Esophagus muscularis mucosa (tissue), 4 donors: ENCODE measurements at regions of chr10 and their contacts with region 1.

Region 1: DNA sequence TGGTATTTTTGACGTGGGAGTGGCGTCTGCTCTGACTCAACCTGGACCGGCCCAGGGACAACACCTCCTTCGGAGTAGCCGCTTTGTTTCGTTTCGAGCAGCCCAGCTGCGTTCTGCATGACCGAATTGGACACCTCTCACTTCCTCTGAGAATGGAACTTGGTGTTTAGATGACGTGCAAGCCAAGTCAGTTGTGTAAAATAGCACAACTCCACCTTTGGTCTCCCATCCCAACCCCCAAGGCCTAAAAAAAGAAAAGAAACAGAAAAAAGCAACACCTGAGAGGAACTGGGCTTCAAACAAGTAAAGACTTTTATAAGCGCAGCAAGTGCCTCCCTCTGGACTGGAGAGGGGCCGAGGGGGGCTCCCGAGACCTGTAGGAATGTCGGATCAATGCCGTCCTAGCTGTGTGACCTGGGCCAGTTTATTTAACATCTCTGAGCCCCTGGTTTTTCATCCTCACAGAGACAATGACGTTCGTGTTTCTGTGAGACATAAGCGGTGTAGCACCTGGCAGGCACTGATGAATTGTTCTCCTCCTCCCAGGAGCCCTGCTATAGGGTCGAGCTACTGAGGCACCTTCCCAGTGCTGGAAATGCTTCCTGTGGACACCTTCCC is 52.0 kb upstream of the SMNDC1 start:
- DNase-seq: no peak
- H3K4me3 ChIP-seq: peak overlapping the region in 3 of 4 donors; percentile 13 to 20 (median 17)
- H3K27ac ChIP-seq: peak overlapping the region in 2 of 4 donors; percentile 27 to 52
- H3K4me1 ChIP-seq: peaks cover 16 to 49% (median 44%) of the 10 kb centered on the region in 4 donors
- H3K27me3 ChIP-seq: no peaks in the 10 kb centered on the region
- CTCF ChIP-seq: no peak
- EP300 ChIP-seq: no peak
- POLR2A ChIP-seq: no peak

Region 2: GRCh38 chr10:110414563-110415309 is 58.0 kb after region 1 on chr10:
- intact Hi-C with region 1: loop called (anchors 5 kb)
- DNase-seq: no peak
- H3K4me3 ChIP-seq: no peak overlapping the region
- H3K27ac ChIP-seq: no peak overlapping the region
- H3K4me1 ChIP-seq: peaks cover 17 to 22% (median 19%) of the 10 kb centered on the region in 4 donors
- H3K27me3 ChIP-seq: no peaks in the 10 kb centered on the region
- CTCF ChIP-seq: no peak
- EP300 ChIP-seq: no peak
- POLR2A ChIP-seq: no peak

Region 3: GRCh38 chr10:110487411-110488123 is 130.8 kb after region 1 on chr10:
- intact Hi-C with region 1: no loop called
- DNase-seq: no peak
- H3K4me3 ChIP-seq: no peak overlapping the region
- H3K27ac ChIP-seq: no peak overlapping the region
- H3K4me1 ChIP-seq: peaks cover 0 to 10% (median 2%) of the 10 kb centered on the region in 4 donors
- H3K27me3 ChIP-seq: no peaks in the 10 kb centered on the region
- CTCF ChIP-seq: no peak
- EP300 ChIP-seq: no peak
- POLR2A ChIP-seq: no peak